Activated B cell treated with CpG ODN at 0.5 μM for 24 hours (primary cell): ENCODE measurements at regions of chr6 and their contacts with region 1.

Region 1: GRCh38 chr6:105077596-105078385 is 102.0 kb downstream of the POPDC3 start:
- DNase-seq: no peak
- ATAC-seq: no peak
- H3K4me3 Mint-ChIP-seq: no peak overlapping the region
- H3K27ac Mint-ChIP-seq: no peak overlapping the region
- H3K4me1 Mint-ChIP-seq: no peaks in the 10 kb centered on the region
- H3K27me3 Mint-ChIP-seq: peaks cover 15% of the 10 kb centered on the region
- CTCF ChIP-seq: no peak

Region 2: DNA sequence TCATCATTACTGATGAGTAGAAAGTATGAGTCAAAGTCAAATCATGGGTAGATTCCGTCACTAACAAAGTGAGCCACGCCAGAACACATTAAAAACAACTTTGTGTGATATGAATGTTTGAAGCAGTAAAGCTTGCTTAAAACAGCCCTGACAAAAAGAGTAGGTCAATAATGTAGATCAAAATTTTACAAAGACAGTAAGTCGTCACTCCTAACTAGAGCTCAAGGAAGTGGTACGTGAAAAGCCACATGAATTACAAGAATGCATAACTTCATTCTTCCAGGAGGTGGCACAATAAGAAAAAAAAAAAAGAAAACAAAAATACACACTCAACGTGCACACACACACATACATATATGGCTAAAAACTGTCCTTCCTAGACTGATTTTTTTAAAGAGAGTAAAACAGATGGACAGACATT is 288.0 kb before region 1 on chr6:
- CTCF ChIA-PET with region 1: interaction called, 3 read pairs
- POLR2A ChIA-PET with region 1: no interaction called
- intact Hi-C with region 1: loop called (anchors 5 kb)
- DNase-seq: no peak
- ATAC-seq: no peak
- H3K4me3 Mint-ChIP-seq: no peak overlapping the region
- H3K27ac Mint-ChIP-seq: no peak overlapping the region
- H3K4me1 Mint-ChIP-seq: peaks cover 2% of the 10 kb centered on the region
- H3K27me3 Mint-ChIP-seq: no peaks in the 10 kb centered on the region
- CTCF ChIP-seq: no peak

Region 3: DNA sequence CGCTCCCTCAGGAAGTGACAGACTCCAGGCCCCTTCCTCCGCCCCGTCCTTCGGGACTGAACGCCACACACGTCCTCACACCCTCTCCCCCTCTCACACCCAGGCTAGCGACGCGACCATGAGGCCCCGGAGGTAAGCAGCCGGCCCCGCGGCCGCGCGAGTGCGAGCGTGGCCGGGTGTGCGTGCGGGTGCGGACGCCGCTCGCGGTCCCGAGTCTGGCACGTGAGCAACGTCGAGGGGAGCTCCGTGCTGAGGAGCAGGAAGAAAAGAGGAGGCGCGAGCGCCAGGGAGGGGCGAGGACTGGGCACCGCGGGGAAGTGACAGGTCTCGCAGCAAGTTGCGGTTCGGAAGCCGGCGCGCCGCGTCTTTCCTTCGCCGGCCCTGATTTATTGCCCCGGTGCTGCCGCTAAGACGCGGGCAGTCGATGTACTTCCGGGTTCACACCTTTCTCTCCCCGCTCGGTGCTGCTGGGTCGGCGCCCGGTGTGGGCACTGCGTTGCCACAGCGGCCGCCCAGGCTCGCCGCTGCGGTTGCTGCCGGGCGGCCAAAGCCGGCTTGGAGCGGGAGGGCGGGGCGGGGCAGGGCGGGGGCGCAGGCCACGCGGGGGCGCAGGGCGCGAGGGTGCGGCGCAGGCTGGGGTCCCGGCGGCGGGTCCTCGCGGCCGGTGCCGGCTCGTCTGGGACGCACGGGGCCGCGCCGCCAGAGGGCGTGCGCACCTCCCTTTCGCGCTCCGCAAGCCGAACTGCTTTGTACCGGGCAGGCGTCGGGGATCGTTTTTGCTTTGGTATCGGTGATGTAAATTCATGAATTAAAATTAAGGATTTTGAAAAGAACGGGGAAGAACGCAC is 136.7 kb before region 1 on chr6:
- CTCF ChIA-PET with region 1: no interaction called
- POLR2A ChIA-PET with region 1: no interaction called
- intact Hi-C with region 1: loop called (anchors 2 kb)
- DNase-seq: no peak
- ATAC-seq: peak; percentile 57
- H3K4me3 Mint-ChIP-seq: peak overlapping the region; percentile 56
- H3K27ac Mint-ChIP-seq: no peak overlapping the region
- H3K4me1 Mint-ChIP-seq: peaks cover 7% of the 10 kb centered on the region
- H3K27me3 Mint-ChIP-seq: peaks cover 30% of the 10 kb centered on the region
- CTCF ChIP-seq: no peak